Breast epithelium (tissue), 4 donors: ENCODE measurements at regions of chr7 and their contacts with region 1.

Region 1: GRCh38 chr7:137642472-137642871 is 204.3 kb downstream of the DGKI start:
- DNase-seq: no peak
- H3K4me3 ChIP-seq: no peak overlapping the region
- H3K27ac ChIP-seq: no peak overlapping the region
- H3K4me1 ChIP-seq: no peaks in the 10 kb centered on the region
- H3K27me3 ChIP-seq: peaks cover 0 to 10% of the 10 kb centered on the region in 2 donors
- CTCF ChIP-seq: no peak
- POLR2A ChIP-seq: no peak

Region 2: GRCh38 chr7:137626469-137627067 is 15.9 kb before region 1 on chr7:
- intact Hi-C with region 1: loop called (anchors 2 kb)
- DNase-seq: no peak
- H3K4me3 ChIP-seq: no peak overlapping the region
- H3K27ac ChIP-seq: no peak overlapping the region
- H3K4me1 ChIP-seq: no peaks in the 10 kb centered on the region
- H3K27me3 ChIP-seq: no peaks in the 10 kb centered on the region
- CTCF ChIP-seq: peak in 2 of 3 donors; percentile 26 to 27
- POLR2A ChIP-seq: no peak

Region 3: DNA sequence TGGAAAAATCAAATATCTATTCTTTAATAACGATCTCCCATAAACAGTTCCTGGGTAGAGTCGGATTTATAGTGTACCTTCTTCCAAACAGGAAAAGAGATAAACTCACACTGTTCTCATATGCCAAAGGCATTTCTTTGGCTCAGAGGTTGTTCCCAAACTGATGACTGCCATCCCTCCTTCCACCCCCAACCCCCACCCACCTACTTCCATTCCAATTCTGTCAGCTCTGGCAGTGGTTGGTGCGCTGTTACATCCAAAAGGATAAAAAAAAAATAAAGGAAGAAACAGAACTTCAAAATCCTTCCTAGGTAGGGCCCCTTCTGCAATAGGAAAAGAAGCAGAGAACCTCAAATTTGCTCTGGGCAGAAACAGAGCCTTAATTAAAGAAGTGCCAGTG is 99.6 kb after region 1 on chr7:
- intact Hi-C with region 1: no loop called
- DNase-seq: no peak
- H3K4me3 ChIP-seq: no peak overlapping the region
- H3K27ac ChIP-seq: no peak overlapping the region
- H3K4me1 ChIP-seq: no peaks in the 10 kb centered on the region
- H3K27me3 ChIP-seq: no peaks in the 10 kb centered on the region
- CTCF ChIP-seq: no peak
- POLR2A ChIP-seq: no peak

Region 4: GRCh38 chr7:137992550-137993394 is 350.3 kb after region 1 on chr7:
- intact Hi-C with region 1: no loop called
- DNase-seq: peak in 1 of 2 donors; percentile 76
- H3K4me3 ChIP-seq: peak overlapping the region in 1 of 3 donors; percentile 9
- H3K27ac ChIP-seq: peak overlapping the region; percentile 83 to 86
- H3K4me1 ChIP-seq: peaks cover 0 to 29% of the 10 kb centered on the region in 2 donors
- H3K27me3 ChIP-seq: no peaks in the 10 kb centered on the region
- CTCF ChIP-seq: no peak
- POLR2A ChIP-seq: no peak

Region 5: DNA sequence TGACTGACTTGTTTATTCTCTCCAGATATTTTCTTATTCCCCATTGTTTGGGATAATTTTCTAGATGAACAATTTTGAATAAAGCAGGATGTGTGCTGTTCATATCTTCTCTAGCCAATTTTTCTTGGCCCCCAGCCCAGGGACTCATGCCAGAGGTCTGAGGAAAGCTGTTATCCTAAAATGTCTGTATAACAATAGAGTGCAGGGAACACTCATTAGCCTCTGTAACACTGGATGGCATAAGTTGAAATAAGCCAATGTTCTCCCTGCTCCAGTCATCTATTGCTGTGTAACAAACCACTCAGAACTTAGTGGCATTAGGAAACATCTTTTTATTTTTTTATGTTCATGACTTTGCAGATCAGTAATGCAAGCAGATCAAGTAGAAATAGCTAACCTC is 695.9 kb after region 1 on chr7:
- intact Hi-C with region 1: no loop called
- DNase-seq: peak; percentile 53 to 66
- H3K4me3 ChIP-seq: no peak overlapping the region
- H3K27ac ChIP-seq: peak overlapping the region in 1 of 2 donors; percentile 25
- H3K4me1 ChIP-seq: no peaks in the 10 kb centered on the region
- H3K27me3 ChIP-seq: no peaks in the 10 kb centered on the region
- CTCF ChIP-seq: no peak
- POLR2A ChIP-seq: no peak